AG04450 (cell line): ENCODE measurements at regions of chr20 and their contacts with region 1.

Region 1: DNA sequence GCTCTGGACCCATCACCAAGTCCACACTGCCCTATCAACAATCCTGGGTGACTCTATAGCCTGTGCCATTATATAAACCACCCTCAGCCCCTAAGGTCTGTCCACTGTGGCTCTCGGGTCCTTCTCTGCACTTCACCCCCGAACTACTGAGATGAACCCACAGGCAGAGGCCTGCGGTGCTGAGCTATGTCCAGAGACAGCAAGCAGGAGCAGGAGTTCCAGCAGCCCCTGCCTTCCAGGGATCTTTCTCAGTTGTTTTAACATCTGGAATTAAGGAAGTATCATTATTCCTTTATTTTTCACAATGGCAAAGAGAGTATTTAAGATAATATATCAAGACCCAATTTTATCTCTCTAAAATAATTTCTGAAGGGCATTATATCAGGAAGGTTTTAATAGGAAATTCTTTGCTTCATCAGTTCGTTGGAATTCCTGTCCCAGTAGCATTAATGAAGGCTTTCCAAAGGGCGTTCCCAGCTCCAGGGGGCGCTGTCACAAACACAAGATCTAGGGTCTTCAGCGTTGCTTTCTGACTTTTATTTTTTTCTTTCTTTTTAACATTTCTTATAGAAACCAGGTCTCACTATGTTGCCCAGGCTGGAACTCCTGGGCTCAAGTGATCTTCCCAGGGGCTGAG is 27.3 kb downstream of the RRBP1 start:
- DNase-seq: peak; percentile 21
- H3K4me3 ChIP-seq: no peak overlapping the region
- H3K27ac ChIP-seq: peak overlapping the region; percentile 39
- H3K27me3 ChIP-seq: no peaks in the 10 kb centered on the region
- CTCF ChIP-seq: peak; percentile 71

Region 2: GRCh38 chr20:17604852-17605660 is 49.7 kb before region 1 on chr20:
- CTCF ChIA-PET with region 1: no interaction called
- POLR2A ChIA-PET with region 1: no interaction called
- DNase-seq: no peak
- H3K4me3 ChIP-seq: no peak overlapping the region
- H3K27ac ChIP-seq: no peak overlapping the region
- H3K27me3 ChIP-seq: no peaks in the 10 kb centered on the region
- CTCF ChIP-seq: no peak

Region 3: DNA sequence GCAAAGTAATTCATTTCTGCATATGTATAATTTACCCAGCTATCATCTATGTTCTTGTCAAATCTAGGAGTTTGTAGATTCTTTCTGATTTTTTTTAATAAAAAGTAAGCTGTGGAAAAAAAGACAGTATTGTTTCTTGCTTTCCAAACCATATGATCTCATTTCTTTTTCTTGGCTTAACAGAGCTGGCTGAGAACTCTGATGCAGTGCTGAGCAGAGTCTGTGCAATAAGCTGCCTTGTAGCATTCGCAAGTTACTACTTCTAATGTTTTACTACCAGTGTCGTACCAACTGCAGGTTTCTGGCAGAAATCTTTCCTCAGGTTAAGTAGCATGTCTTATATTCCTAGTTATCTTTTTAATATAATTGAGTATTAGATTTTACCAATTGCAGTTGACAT is 11.7 kb after region 1 on chr20:
- CTCF ChIA-PET with region 1: interaction called, 10 read pairs
- POLR2A ChIA-PET with region 1: interaction called, 3 read pairs
- DNase-seq: no peak
- H3K4me3 ChIP-seq: no peak overlapping the region
- H3K27ac ChIP-seq: no peak overlapping the region
- H3K27me3 ChIP-seq: no peaks in the 10 kb centered on the region
- CTCF ChIP-seq: no peak

Region 4: DNA sequence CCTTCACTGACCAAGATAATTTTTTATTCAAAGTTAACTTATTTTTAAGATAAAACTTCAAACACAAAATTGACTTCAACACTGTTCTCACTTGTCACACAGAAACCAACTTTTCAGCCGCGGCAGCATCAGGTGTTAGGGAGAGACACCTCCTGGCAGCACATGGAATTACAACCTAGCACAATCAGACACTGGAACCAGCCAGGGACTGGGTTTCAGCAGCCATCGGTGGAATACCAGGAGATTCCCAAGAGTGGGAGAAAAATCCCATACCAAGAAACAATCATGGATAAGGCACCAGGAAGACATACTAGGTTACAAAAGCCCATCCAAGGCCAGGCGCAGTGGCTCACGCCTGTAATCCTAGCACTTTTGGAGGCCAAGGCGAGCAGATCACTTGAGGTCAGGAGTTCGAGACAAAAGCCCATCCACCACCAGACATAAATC is 243.8 kb after region 1 on chr20:
- CTCF ChIA-PET with region 1: interaction called, 18 read pairs
- POLR2A ChIA-PET with region 1: no interaction called
- DNase-seq: peak; percentile 44
- H3K4me3 ChIP-seq: no peak overlapping the region
- H3K27ac ChIP-seq: no peak overlapping the region
- H3K27me3 ChIP-seq: no peaks in the 10 kb centered on the region
- CTCF ChIP-seq: peak; percentile 98